Heart right ventricle (tissue), 16 donors: ENCODE measurements at regions of chr20 and their contacts with region 1.

Region 1: DNA sequence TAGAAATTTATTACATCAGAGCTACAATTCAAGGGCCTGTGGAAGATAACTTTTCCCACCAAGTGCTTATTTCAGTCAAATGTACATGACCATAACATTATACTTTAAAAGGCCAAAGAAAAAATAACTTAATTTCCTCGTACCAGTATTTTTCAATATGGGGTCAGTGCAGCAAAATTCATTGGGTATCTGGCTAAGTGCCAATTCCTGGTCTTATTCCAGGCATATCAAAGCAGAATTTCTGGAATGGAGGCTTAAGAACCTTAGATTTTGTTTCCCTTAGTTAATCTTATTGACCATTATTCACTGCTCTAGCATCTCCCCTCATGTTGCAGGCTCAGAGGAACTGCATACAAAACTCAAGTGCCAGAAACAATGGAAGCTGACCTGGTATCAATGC is 723.1 kb downstream of the MAFB start:
- DNase-seq: no peak
- ATAC-seq: no peak
- H3K4me3 ChIP-seq: no peak overlapping the region
- H3K27ac ChIP-seq: no peak overlapping the region
- H3K4me1 ChIP-seq: peaks cover 0 to 11% (median 6%) of the 10 kb centered on the region in 9 donors
- H3K27me3 ChIP-seq: no peaks in the 10 kb centered on the region
- CTCF ChIP-seq: no peak

Region 2: DNA sequence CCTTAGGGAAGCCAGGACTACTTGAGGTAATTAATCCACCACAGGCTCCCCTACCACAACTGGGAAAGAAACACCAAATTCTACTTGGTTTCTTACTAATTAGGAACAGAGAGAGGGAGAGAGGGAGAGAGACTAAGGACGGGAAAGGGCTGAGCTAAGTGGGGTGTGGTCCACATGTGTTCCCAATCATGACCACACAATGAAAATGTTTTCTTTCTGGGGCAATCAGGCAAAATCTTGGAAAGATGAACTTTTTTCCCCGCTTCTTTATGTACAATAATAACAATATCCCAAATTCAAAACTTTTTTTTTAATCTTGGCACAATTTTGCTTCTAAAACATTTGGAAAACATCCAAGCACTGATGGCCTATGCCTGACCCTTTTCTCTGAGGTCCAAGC is 11.3 kb before region 1 on chr20:
- intact Hi-C with region 1: loop called in 1 of 10 experiments (anchors 1 kb)
- DNase-seq: no peak
- ATAC-seq: peak in 1 of 8 donors; percentile 58
- H3K4me3 ChIP-seq: no peak overlapping the region
- H3K27ac ChIP-seq: no peak overlapping the region
- H3K4me1 ChIP-seq: no peaks in the 10 kb centered on the region
- H3K27me3 ChIP-seq: no peaks in the 10 kb centered on the region
- CTCF ChIP-seq: no peak